ENCODE measurements at regions of chr5 and their contacts with region 1.

Region 1: GRCh38 chr5:19608444-19609002 is 379.5 kb downstream of the CDH18 start:
- DNase-seq: peak; percentile 38
- H3K4me3 Mint-ChIP-seq: no peak overlapping the region
- H3K27ac Mint-ChIP-seq: no peak overlapping the region
- H3K4me1 Mint-ChIP-seq: peaks cover 9% of the 10 kb centered on the region
- H3K27me3 Mint-ChIP-seq: no peaks in the 10 kb centered on the region
- CTCF ChIP-seq: peak; percentile 32

Region 2: GRCh38 chr5:18393589-18394442 is 1214.7 kb before region 1 on chr5:
- CTCF ChIA-PET with region 1: interaction called, 5 read pairs
- POLR2A ChIA-PET with region 1: no interaction called
- intact Hi-C with region 1: loop called (anchors 10 kb)
- DNase-seq: peak; percentile 83
- H3K4me3 Mint-ChIP-seq: no peak overlapping the region
- H3K27ac Mint-ChIP-seq: no peak overlapping the region
- H3K4me1 Mint-ChIP-seq: no peaks in the 10 kb centered on the region
- H3K27me3 Mint-ChIP-seq: no peaks in the 10 kb centered on the region
- CTCF ChIP-seq: peak; percentile 90

Region 3: DNA sequence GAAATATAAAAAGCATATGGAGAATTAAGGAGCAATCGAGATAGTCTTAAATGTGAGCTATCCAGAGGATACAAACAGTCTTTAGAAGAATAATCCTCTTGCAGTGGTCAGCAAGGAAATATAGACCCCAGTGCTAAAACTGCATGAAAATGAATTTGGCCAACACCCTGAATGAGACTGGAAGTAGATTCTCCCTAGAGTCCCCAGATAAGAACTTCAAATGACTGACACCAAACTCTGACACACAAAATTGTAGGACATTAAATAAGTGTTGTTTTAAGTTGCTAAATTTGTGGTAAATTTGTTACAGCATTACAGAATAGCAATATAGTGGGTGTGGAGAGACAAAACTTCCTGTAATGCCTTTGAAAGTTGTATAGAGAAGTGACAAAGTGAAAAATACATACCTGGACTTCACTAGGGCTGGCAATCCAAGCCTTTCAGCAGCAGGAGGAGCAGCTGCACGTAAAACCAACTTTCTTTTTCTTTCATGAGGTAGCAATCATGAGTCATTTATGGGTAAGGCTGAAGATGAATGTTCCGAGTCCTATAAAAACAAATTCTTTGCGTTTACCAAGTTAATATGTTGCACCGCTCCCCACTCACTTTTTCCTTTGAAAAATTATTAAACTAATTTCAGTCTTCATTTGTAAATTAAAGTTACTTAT is 836.2 kb before region 1 on chr5:
- CTCF ChIA-PET with region 1: interaction called, 13 read pairs
- POLR2A ChIA-PET with region 1: no interaction called
- intact Hi-C with region 1: loop called (anchors 1 kb)
- DNase-seq: peak; percentile 74
- H3K4me3 Mint-ChIP-seq: peak overlapping the region; percentile 50
- H3K27ac Mint-ChIP-seq: peak overlapping the region; percentile 60
- H3K4me1 Mint-ChIP-seq: peaks cover 10% of the 10 kb centered on the region
- H3K27me3 Mint-ChIP-seq: no peaks in the 10 kb centered on the region
- CTCF ChIP-seq: peak; percentile 74